BJ (cell line): ENCODE measurements at regions of chr4 and their contacts with region 1.

Region 1: GRCh38 chr4:87150498-87151261 is 69.7 kb downstream of the KLHL8 start:
- DNase-seq: peak; percentile 23
- H3K4me3 ChIP-seq: no peak overlapping the region
- H3K27me3 ChIP-seq: no peaks in the 10 kb centered on the region
- CTCF ChIP-seq: peak; percentile 83

Region 2: DNA sequence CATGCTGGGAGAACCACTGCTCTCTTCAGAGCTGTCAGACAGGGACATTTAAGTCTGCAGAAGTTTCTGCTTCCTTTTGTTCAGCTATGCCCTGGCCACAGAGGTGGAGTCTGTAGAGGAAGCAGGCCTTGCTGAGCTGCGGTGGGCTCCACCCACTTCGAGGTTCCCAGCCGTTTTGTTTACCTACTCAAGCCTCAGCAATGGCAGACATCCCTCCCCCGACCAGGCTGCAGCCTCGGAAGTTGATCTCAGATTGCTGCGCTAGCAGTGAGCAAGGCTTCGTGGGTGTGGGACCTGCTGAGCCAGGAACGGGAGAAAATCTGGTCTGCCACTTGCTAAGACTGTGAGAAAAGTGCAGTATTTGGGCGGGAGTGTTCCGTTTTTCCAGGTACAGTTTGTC is 420.4 kb before region 1 on chr4:
- CTCF ChIA-PET with region 1: no interaction called
- POLR2A ChIA-PET with region 1: no interaction called
- DNase-seq: no peak
- H3K4me3 ChIP-seq: no peak overlapping the region
- H3K27me3 ChIP-seq: no peaks in the 10 kb centered on the region
- CTCF ChIP-seq: no peak

Region 3: DNA sequence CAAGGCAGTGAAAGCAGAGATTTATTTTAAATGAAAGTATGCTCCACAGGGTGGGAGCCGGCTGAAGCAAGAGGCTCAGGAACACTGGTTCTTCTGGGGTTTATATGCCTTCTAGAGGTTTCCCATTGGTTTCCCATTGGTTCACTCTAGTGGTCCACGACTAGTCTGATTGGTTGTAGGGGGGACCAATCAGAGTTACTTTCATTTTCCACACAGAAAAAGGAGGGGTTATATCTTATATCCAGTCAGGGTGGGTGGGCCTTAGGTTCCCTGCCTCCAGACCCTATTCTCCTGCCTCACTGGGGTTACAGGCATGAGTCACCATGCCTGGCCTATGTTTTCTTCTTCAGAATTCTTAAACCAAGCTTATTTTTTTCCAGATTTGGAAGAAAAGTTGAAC is 31.9 kb before region 1 on chr4:
- CTCF ChIA-PET with region 1: interaction called, 10 read pairs
- POLR2A ChIA-PET with region 1: no interaction called
- DNase-seq: no peak
- H3K4me3 ChIP-seq: no peak overlapping the region
- H3K27me3 ChIP-seq: no peaks in the 10 kb centered on the region
- CTCF ChIP-seq: no peak

Region 4: GRCh38 chr4:87235020-87235671 is 84.5 kb after region 1 on chr4:
- CTCF ChIA-PET with region 1: interaction called, 27 read pairs
- POLR2A ChIA-PET with region 1: no interaction called
- DNase-seq: no peak
- H3K4me3 ChIP-seq: no peak overlapping the region; the same call in 1 of the 2 replicates
- H3K27me3 ChIP-seq: no peaks in the 10 kb centered on the region; the same call in 1 of the 2 replicates
- CTCF ChIP-seq: no peak

Region 5: DNA sequence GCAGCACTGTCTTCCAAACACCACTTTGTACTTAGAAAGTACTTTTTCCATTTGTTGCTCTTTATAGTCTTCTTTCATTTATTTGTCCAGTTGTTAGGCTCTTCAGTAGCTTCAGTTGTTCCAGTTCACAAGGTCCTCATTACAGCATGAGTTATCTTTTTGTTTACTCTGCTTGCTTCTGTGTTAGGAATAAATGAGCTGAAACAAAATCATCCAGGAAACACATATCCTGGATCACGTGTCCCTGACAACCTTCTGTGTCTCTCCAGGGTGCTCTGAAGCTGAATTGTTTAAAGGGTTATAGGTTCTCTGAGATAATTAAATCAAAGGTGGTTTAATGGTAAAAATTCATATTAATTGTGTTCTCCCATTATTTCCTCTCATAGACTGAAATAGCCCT is 89.7 kb after region 1 on chr4:
- CTCF ChIA-PET with region 1: interaction called, 27 read pairs
- POLR2A ChIA-PET with region 1: no interaction called
- DNase-seq: no peak
- H3K4me3 ChIP-seq: no peak overlapping the region
- H3K27me3 ChIP-seq: no peaks in the 10 kb centered on the region
- CTCF ChIP-seq: no peak